ENCODE measurements at regions of chr5 and their contacts with region 1.

Region 1: GRCh38 chr5:156824800-156825199 is 25.3 kb upstream of the PPP1R2B start:
- DNase-seq: peak; percentile 78
- H3K4me3 ChIP-seq: no peak overlapping the region
- H3K27ac ChIP-seq: no peak overlapping the region
- H3K4me1 ChIP-seq: no peaks in the 10 kb centered on the region
- H3K27me3 ChIP-seq: no peaks in the 10 kb centered on the region

Region 2: DNA sequence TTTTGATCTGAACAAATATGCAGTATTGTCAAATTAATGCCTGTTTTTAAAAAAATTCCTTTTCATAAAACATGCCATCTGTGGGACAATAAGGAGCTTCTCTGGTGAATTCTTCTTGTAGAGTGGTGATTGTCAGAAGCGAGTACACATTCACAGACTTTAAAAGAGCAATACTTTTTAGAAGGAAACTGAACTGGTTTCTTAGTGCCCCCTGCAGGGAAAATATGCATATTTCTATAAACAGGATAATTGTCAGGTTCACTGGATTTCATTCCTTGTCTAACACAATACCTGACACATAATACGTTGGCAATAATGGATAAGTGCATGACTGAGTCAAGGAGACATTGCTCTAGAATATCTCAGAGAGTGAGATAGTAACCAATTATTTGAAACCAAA is 1677.6 kb before region 1 on chr5:
- in situ Hi-C with region 1: loop called (anchors 25 kb)
- DNase-seq: peak; percentile 27
- H3K4me3 ChIP-seq: no peak overlapping the region
- H3K27ac ChIP-seq: no peak overlapping the region
- H3K4me1 ChIP-seq: no peaks in the 10 kb centered on the region
- H3K27me3 ChIP-seq: no peaks in the 10 kb centered on the region

Region 3: DNA sequence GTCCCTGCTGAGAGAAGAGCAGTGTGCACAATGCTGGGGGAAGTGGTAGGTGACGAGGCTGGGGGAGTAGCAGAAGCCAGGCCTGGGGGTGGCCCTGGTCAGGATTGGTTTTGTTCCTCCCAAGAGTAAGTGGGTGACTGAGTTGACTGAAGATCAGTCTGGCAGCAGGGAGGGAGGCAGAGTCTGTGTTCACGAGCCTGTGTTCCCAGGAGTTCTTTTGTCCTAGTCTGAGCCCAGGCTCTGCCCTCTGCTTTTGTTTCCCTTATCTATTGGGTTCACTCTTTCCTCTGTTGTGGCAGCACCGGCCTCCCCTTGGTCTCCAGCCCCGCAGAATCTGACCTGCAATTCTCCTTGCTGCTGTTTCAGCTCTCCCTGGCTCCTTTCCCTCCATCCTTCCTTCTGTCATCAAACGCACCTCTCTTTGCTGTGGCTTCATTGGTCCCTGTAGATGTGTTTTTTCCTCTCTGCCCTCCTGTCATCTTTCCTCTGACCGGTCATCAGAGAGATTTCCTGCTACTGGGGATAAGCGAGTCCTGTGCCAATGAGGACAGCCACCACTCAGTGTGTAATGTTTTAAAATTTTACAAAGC is 1203.9 kb before region 1 on chr5:
- in situ Hi-C with region 1: loop called (anchors 10 kb)
- DNase-seq: no peak
- H3K4me3 ChIP-seq: no peak overlapping the region
- H3K27ac ChIP-seq: no peak overlapping the region
- H3K4me1 ChIP-seq: no peaks in the 10 kb centered on the region
- H3K27me3 ChIP-seq: no peaks in the 10 kb centered on the region

Region 4: GRCh38 chr5:155943516-155944407 is 881.0 kb before region 1 on chr5:
- in situ Hi-C with region 1: loop called (anchors 10 kb)
- DNase-seq: peak; percentile 81
- H3K4me3 ChIP-seq: no peak overlapping the region
- H3K27ac ChIP-seq: no peak overlapping the region
- H3K4me1 ChIP-seq: no peaks in the 10 kb centered on the region
- H3K27me3 ChIP-seq: no peaks in the 10 kb centered on the region

Region 5: DNA sequence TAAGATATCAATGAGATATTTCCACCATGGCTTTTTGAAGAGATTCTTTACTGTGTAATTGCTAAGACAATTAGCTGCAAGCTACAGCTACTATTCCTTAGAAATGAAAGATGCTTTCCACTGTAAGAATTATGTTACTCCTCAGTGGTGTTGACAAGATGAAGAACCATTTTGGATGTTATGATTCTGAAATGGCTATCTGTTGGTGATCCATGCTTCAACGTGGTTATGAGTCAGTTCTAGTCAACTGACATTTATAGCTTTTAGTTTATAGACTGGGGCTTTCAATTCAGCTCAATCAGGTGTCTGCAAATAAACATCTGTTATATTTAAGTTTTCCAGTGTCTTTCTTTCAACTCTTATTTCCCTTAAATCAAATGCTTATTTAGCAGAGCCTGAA is 404.1 kb before region 1 on chr5:
- in situ Hi-C with region 1: no loop called
- DNase-seq: no peak
- H3K4me3 ChIP-seq: no peak overlapping the region
- H3K27ac ChIP-seq: no peak overlapping the region
- H3K4me1 ChIP-seq: no peaks in the 10 kb centered on the region
- H3K27me3 ChIP-seq: no peaks in the 10 kb centered on the region